ENCODE measurements at regions of chr18 and their contacts with region 1.

Region 1: DNA sequence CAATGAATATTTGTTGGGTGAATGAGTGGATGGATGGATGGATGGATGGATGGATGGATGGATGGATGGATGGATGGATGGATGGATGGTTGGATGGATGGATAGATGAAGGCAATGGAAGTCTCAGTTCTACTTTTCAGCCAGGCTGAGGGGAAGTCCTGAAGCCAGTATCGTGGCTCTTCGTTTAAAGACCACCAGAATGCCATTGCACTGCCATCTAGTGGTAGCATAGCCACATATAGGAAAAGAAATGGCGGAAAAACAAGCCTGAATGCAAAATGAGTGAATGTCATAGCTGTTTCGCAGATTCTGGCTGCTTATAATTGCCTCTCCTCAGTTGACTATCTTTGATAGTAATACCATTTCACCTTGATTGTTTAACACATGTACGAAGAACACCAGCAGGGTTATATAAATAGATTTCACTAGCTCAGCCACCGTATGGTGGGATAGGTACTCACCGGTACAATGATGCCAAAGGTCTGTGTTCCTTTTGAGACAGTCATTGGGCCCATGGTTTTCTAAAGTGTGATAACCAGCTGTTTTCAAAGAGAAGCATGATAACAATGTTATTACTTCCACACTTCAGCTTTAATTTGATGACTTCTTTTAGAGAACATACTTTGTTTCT is 62.3 kb upstream of the GREB1L start:
- DNase-seq: peak; percentile 74
- H3K4me3 ChIP-seq: no peak overlapping the region
- H3K27ac ChIP-seq: no peak overlapping the region
- H3K4me1 ChIP-seq: no peaks in the 10 kb centered on the region
- H3K27me3 ChIP-seq: no peaks in the 10 kb centered on the region
- CTCF ChIP-seq: peak; percentile 79

Region 2: GRCh38 chr18:20971886-20972267 is 207.8 kb before region 1 on chr18:
- CTCF ChIA-PET with region 1: no interaction called
- POLR2A ChIA-PET with region 1: no interaction called
- intact Hi-C with region 1: loop called (anchors 5 kb)
- DNase-seq: peak; percentile 61
- H3K4me3 ChIP-seq: no peak overlapping the region
- H3K27ac ChIP-seq: no peak overlapping the region
- H3K4me1 ChIP-seq: no peaks in the 10 kb centered on the region
- H3K27me3 ChIP-seq: no peaks in the 10 kb centered on the region
- CTCF ChIP-seq: peak; percentile 66

Region 3: GRCh38 chr18:21123290-21123926 is 56.3 kb before region 1 on chr18:
- CTCF ChIA-PET with region 1: no interaction called
- POLR2A ChIA-PET with region 1: no interaction called
- intact Hi-C with region 1: loop called (anchors 5 kb)
- DNase-seq: no peak
- H3K4me3 ChIP-seq: no peak overlapping the region
- H3K27ac ChIP-seq: no peak overlapping the region
- H3K4me1 ChIP-seq: no peaks in the 10 kb centered on the region
- H3K27me3 ChIP-seq: no peaks in the 10 kb centered on the region
- CTCF ChIP-seq: no peak

Region 4: DNA sequence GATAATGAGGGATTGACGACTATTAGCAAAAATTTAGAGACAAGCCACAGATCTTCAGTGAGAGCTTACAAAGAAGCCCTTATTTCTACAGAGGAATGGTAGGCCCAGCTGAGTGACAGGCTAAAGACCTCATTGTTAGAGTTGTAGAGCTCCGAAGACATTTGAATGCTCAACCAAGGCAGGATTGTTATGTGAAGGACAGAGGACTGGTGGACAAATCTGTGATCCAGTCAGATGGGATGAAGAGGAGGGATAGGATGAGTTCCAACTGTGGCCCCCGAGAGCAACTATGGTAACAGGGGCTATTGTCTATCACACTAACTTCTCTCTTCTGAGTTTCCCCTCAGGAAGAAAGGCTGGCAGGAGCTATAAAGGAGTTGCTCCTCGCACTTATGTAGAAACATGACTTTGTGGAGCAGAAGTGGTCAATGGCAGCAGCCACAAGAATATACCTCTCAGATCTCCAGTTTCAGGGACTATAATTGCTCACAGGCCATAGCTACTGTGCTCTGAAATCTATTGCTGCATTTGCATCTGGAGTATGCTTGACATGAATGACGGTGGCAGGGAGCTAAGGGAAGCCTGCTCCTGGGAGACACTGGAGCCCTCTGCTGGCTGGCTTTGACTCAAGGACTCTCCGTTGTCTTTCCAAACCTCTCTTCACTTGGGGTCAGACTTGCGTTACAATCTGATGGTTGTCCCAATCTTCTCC is 12.0 kb after region 1 on chr18:
- CTCF ChIA-PET with region 1: interaction called, 13 read pairs
- POLR2A ChIA-PET with region 1: no interaction called
- intact Hi-C with region 1: no loop called
- DNase-seq: peak; percentile 72
- H3K4me3 ChIP-seq: no peak overlapping the region
- H3K27ac ChIP-seq: no peak overlapping the region
- H3K4me1 ChIP-seq: no peaks in the 10 kb centered on the region
- H3K27me3 ChIP-seq: peaks cover 3% of the 10 kb centered on the region
- CTCF ChIP-seq: peak; percentile 76

Region 5: DNA sequence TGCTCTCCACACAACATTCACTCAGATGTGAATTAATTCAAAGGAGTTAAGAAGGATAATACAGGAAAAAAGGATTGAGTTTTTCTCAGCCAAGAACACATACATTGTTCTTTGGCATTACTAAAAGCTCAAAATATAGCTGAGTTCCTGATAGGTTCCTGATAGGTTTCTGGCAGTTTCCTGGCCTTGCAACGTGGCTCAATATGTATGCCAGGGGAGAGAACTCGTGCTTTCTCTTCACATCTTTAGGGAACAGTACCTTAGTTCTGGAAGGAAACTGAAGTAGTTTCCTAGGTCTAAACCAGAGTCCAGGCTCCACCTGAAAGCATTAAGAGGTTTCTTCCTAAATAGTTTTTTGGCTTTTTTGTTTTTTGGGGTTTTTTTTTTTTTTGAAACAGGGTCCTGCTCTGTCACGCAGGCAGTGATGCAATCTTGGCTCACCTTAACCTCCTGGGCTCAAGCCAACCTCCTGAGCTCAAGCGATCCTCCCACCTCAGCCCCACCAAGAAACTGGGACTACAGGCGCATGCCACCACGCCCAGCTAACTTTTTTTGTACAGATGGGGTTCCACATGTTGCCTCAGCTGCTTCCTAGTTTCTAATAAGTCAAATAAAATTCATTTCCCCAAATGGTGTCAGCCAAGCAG is 378.0 kb after region 1 on chr18:
- CTCF ChIA-PET with region 1: no interaction called
- POLR2A ChIA-PET with region 1: no interaction called
- intact Hi-C with region 1: no loop called
- DNase-seq: no peak
- H3K4me3 ChIP-seq: no peak overlapping the region
- H3K27ac ChIP-seq: peak overlapping the region; percentile 14
- H3K4me1 ChIP-seq: no peaks in the 10 kb centered on the region
- H3K27me3 ChIP-seq: no peaks in the 10 kb centered on the region
- CTCF ChIP-seq: no peak

Measured in A673 (cell line).